ENCODE measurements at regions of chr14 and their contacts with region 1.

Region 1: DNA sequence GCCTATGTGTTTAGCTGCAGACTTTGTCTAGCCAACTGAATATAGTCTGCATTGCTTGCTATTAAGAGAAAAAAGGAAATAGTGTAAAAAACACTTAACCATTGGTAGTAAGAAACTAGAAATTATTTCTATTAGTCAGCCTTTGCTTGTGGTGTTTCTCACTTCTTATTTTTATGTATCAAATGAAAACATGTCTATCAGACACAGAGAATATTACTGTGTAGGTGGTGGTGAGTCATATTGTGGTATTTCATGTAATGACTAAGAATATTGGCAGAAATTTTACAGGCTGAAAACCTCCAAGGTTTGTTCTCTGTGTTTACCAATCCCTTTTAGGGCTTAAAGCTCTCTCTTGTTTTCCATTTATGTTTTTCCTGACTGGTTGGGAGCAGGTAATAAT is 87.2 kb downstream of the DAAM1 start:
- DNase-seq: no peak
- H3K4me3 Mint-ChIP-seq: no peak overlapping the region
- H3K27ac Mint-ChIP-seq: peak overlapping the region; percentile 28
- H3K4me1 Mint-ChIP-seq: peaks cover 43% of the 10 kb centered on the region
- H3K27me3 Mint-ChIP-seq: peaks cover 7% of the 10 kb centered on the region

Region 2: GRCh38 chr14:58749066-58749669 is 526.5 kb before region 1 on chr14:
- intact Hi-C with region 1: loop called (anchors 2 kb)
- DNase-seq: peak; percentile 27
- H3K4me3 Mint-ChIP-seq: no peak overlapping the region
- H3K27ac Mint-ChIP-seq: peak overlapping the region; percentile 21
- H3K4me1 Mint-ChIP-seq: peaks cover 15% of the 10 kb centered on the region
- H3K27me3 Mint-ChIP-seq: no peaks in the 10 kb centered on the region

Region 3: DNA sequence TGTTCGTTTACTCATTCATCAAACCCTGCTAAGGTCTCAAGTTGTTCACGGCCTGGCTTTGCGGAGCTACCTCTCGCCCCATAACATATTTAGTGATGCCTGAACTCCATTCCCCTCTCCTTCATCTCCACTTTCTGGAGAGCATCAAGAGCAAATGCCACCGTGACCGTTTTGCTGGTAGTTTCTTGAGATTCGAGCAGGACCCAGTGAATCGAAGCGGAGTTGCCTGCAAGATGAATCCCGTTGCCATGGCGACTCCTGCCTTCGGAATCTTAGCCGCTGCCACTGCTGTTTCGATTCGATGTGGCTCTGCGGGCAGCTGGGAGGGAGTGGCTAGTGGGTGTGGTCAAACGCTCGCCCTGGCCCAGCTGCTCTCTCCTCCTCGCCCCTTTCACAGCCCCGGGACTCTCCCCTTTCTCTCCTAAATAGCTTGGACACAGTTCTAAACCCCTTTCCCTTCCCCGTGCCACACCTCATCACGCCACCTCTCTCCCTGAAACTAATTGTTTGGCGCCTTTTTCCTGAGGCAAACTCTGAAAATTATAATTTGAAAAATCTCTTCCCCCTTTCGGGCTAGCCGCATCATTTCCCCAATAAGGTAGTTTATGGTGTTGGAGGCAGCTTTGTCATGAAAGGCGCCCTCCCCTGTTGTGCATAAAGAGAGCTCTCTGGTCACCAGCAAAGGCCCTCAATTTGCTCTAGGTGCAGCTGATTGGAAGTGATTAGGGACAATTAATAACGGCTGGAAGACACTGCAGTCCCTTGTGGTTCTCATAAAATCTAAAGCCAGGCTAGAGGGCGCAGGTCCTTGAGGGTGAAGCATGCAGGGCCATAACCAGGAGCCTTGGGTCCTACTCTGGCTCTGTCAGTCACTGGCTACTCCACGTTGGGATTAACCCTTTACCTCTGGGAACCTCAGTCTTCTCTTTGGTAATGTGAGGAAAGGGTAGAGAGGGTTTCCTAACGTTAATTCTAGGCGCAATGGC is 85.6 kb before region 1 on chr14:
- intact Hi-C with region 1: loop called (anchors 2 kb)
- DNase-seq: peak; percentile 79
- H3K4me3 Mint-ChIP-seq: peak overlapping the region; percentile 95
- H3K27ac Mint-ChIP-seq: peak overlapping the region; percentile 61
- H3K4me1 Mint-ChIP-seq: peaks cover 17% of the 10 kb centered on the region
- H3K27me3 Mint-ChIP-seq: peaks cover 13% of the 10 kb centered on the region

Region 4: GRCh38 chr14:59297061-59297776 is 21.6 kb after region 1 on chr14:
- intact Hi-C with region 1: loop called (anchors 2 kb)
- DNase-seq: no peak
- H3K4me3 Mint-ChIP-seq: peak overlapping the region; percentile 37
- H3K27ac Mint-ChIP-seq: no peak overlapping the region
- H3K4me1 Mint-ChIP-seq: peaks cover 53% of the 10 kb centered on the region
- H3K27me3 Mint-ChIP-seq: peaks cover 1% of the 10 kb centered on the region

Region 5: GRCh38 chr14:59320763-59321640 is 45.3 kb after region 1 on chr14:
- intact Hi-C with region 1: loop called (anchors 10 kb)
- DNase-seq: no peak
- H3K4me3 Mint-ChIP-seq: no peak overlapping the region
- H3K27ac Mint-ChIP-seq: no peak overlapping the region
- H3K4me1 Mint-ChIP-seq: peaks cover 9% of the 10 kb centered on the region
- H3K27me3 Mint-ChIP-seq: peaks cover 1% of the 10 kb centered on the region

Region 6: GRCh38 chr14:59483900-59484638 is 208.4 kb after region 1 on chr14 and contains the starts of genes JKAMP and L3HYPDH:
- intact Hi-C with region 1: loop called (anchors 5 kb)
- DNase-seq: peak; percentile 95
- H3K4me3 Mint-ChIP-seq: peak within 1 kb of the TSS; percentile 91
- H3K27ac Mint-ChIP-seq: peak within 1 kb of the TSS; percentile 84
- H3K4me1 Mint-ChIP-seq: peaks cover 47% of the 10 kb centered on the region
- H3K27me3 Mint-ChIP-seq: no peaks in the 10 kb centered on the region
- total RNA-seq, gene JKAMP: 26.0 and 29.6 TPM in 2 replicates
- total RNA-seq, gene L3HYPDH: 14.2 and 15.9 TPM in 2 replicates

Region 7: GRCh38 chr14:59520224-59520623 is 244.6 kb after region 1 on chr14:
- intact Hi-C with region 1: no loop called
- DNase-seq: no peak
- H3K4me3 Mint-ChIP-seq: no peak overlapping the region
- H3K27ac Mint-ChIP-seq: no peak overlapping the region
- H3K4me1 Mint-ChIP-seq: no peaks in the 10 kb centered on the region
- H3K27me3 Mint-ChIP-seq: peaks cover 3% of the 10 kb centered on the region